Heart right ventricle (tissue), 16 donors: ENCODE measurements at regions of chr16 and their contacts with region 1.

Region 1: DNA sequence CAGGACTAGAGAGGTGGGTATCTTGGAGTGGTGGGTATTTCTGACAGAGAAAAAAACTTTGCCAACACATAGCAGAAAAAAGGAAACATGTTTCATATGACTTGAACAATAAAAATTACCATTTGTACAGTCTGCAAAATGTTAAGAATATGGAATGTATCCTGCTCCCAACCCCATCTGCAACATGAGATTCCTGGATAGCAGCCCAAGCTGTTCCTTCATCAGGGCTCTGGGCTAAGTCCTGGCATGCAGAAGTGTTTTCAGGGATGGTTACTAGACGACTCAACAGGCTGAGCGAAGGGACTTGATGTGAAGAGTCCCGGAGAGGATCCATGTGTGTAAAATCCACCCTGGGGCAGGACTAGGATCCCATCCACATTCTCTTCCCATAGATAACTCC is 121.0 kb upstream of the IRX3 start:
- DNase-seq: no peak
- ATAC-seq: peak in 1 of 8 donors; percentile 58
- H3K4me3 ChIP-seq: no peak overlapping the region
- H3K27ac ChIP-seq: no peak overlapping the region
- H3K4me1 ChIP-seq: peaks cover 0 to 36% (median 8%) of the 10 kb centered on the region in 9 donors
- H3K27me3 ChIP-seq: no peaks in the 10 kb centered on the region
- CTCF ChIP-seq: no peak

Region 2: DNA sequence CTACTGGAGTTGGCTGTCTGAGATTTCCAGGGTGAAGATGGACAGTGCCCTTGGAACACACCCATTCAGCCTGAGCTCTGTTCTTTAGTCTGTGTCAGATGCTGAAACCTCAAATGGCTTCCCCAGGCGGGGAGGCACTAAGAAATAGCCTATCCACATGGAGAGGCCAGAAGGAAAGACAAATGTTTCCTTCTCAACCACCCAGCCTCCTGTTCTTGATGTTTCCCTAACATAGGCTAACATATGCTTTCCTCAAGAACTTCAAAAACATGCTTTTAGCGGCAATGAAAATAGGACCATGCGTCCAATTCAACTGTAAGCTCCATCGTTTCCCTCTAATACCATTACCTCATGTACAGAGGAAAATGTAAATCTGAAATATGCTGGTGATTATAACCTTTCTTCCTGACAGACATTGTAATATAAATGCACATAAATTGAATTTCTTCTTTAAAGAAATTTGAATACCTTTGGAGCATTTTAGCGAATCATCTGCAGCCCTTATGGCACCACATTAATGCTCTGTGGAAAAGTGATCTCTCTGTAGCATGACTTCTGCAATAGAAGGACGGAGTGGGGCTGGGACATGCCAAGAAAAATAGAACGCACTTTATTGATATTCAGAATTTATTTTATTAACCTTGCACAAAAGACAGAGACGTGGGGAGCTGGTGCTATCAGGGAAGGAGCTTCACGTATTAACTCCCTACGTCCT is 181.1 kb before region 1 on chr16:
- intact Hi-C with region 1: no loop called
- DNase-seq: no peak
- ATAC-seq: no peak
- H3K4me3 ChIP-seq: no peak overlapping the region
- H3K27ac ChIP-seq: no peak overlapping the region
- H3K4me1 ChIP-seq: no peaks in the 10 kb centered on the region
- H3K27me3 ChIP-seq: no peaks in the 10 kb centered on the region
- CTCF ChIP-seq: no peak

Region 3: DNA sequence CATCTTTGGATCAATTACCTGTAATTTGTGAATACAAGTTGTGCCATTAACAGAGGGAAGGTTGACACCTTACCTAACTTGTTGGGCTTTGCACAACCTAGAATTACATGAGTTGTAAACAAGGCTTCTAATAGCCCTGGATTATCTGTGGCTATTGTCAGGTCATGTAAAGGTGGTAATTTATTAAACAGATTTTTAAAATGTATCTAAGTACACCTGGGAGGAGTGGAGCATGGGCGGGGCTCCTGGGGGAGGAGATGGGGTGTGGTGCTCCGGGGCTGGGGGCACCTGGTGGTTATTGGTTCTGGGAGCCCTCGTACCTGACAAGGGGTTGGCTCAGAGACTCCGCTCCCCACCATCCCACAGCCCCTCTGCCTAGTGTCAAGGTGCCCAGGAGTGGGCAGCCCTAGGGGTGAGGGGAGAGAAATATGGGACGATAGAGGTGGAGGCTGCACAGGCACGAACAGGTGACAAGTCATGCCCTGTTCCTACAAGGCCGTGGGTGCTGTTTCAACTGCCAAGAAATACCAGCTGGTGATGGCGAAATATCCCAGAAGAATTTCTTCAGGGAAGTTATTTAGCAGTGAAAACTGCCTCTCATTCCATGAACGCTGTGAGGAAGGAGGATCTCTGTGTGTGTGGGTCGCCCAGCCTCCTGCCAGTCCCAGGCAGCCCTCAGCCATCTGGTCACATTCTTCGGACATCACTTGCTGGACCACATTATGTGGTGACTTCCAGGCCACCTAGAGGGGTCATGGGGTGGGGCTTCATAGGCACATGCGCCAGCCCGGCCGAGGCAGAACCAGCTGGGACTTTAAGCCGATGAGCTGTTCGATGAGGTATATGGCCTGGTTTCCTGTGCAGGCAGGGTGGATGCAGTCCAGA is 65.5 kb before region 1 on chr16:
- intact Hi-C with region 1: loop called in 1 of 10 experiments (anchors 10 kb)
- DNase-seq: no peak
- ATAC-seq: no peak
- H3K4me3 ChIP-seq: no peak overlapping the region
- H3K27ac ChIP-seq: no peak overlapping the region
- H3K4me1 ChIP-seq: no peaks in the 10 kb centered on the region
- H3K27me3 ChIP-seq: peaks cover 0 to 9% (median 0%) of the 10 kb centered on the region in 7 donors
- CTCF ChIP-seq: no peak

Region 4: GRCh38 chr16:54489225-54490111 is 81.9 kb after region 1 on chr16:
- intact Hi-C with region 1: loop called in 2 of 10 experiments (anchors 5 kb)
- DNase-seq: no peak
- ATAC-seq: peak in 5 of 8 donors; percentile 29 to 74 (median 61)
- H3K4me3 ChIP-seq: no peak overlapping the region
- H3K27ac ChIP-seq: peak overlapping the region in 8 of 10 donors; percentile 29 to 69 (median 52)
- H3K4me1 ChIP-seq: peaks cover 6 to 48% (median 24%) of the 10 kb centered on the region in 9 donors
- H3K27me3 ChIP-seq: no peaks in the 10 kb centered on the region
- CTCF ChIP-seq: no peak